GM12878 (cell line): ENCODE measurements at regions of chr11 and their contacts with region 1.

Region 1: GRCh38 chr11:62337303-62338181 is at the start of gene ASRGL1:
- DNase-seq: peak; percentile 21
- ATAC-seq: peak; percentile 97
- H3K4me3 ChIP-seq: peak within 1 kb of the TSS; percentile 67
- H3K27ac ChIP-seq: no peak within 1 kb of the TSS
- H3K4me1 ChIP-seq: peaks cover 4% of the 10 kb centered on the region
- H3K27me3 ChIP-seq: peaks cover 0 to 4% of the 10 kb centered on the region in 2 experiments; a peak in 2 of 4 replicates
- CTCF ChIP-seq: no peak
- EP300 ChIP-seq: no peak
- POLR2A ChIP-seq: peak; percentile 42; the same call in 1 of the 2 replicates
- RAD21 ChIP-seq: no peak
- polyA plus RNA-seq, gene ASRGL1: 0.97 to 1.9 TPM

Region 2: DNA sequence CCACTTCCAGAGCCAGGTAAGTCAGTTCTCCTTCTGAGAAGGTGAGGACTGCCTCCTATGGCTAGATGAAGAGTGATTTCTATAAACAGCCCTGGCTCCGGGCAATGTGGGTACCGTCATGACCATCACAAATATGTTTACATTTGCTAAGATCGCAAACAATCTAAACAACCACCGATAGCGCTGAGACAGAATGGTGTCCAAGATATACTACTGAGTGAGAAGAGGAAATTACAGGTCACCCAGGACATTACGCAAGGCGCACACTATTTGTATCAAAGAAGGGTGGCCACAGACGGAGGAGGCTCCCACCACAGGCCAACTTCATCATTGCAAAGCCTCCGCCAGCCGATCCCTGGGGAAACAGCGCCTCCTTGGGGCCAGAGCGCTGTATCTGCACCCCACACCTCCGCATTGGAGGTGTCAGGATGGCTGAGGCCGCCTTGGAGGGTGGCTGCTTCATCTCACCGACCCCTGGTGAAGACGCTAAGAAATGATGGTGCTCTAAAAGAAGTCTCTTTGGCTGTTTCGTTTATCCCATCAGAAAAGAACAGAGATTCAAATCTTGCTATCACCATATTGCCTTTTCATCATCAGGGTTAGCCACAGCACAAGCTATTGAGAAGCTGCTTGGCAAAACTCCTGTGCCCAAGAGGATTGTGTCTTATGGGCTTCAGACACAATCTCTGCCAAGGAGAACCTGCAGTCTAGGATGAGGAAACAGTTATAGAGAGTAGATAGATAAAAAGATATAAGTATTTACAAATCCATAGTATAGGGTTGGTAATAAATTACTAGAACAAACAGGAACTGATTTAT is 12.6 kb before region 1 on chr11:
- CTCF ChIA-PET with region 1: interaction called, 15 read pairs
- POLR2A ChIA-PET with region 1: no interaction called
- RAD21 ChIA-PET with region 1: no interaction called
- SMC1A ChIA-PET with region 1: interaction called, 4 read pairs
- in situ Hi-C with region 1: no loop called
- intact Hi-C with region 1: no loop called
- DNase-seq: no peak
- ATAC-seq: peak; percentile 94
- H3K4me3 ChIP-seq: no peak overlapping the region
- H3K27ac ChIP-seq: no peak overlapping the region
- H3K4me1 ChIP-seq: no peaks in the 10 kb centered on the region
- H3K27me3 ChIP-seq: no peaks in the 10 kb centered on the region; a peak in 2 of 4 replicates
- CTCF ChIP-seq: peak; percentile 69 to 75 (median 72)
- EP300 ChIP-seq: no peak
- POLR2A ChIP-seq: no peak
- RAD21 ChIP-seq: peak; percentile 57

Region 3: DNA sequence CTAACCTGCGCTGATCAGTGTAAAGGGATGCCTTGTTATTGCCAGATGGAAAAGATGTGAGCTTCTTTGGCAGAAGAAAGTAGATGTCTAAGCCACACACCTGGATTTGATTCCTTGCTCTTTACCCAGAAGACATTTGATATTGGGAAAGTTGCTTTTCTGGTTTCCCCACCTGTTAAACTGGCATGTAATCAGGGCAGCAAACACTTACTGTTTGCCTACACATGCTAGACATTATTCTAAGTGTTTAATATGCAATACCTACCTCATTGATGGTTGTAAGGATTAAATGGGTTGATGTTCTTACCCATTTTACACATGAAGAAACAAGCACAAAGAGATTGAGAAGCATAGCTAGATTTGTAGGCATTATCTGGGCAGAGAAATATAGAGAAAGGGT is 16.3 kb after region 1 on chr11:
- CTCF ChIA-PET with region 1: interaction called, 37 read pairs
- POLR2A ChIA-PET with region 1: no interaction called
- RAD21 ChIA-PET with region 1: no interaction called
- SMC1A ChIA-PET with region 1: interaction called, 6 read pairs
- in situ Hi-C with region 1: no loop called
- intact Hi-C with region 1: no loop called
- DNase-seq: no peak
- ATAC-seq: no peak
- H3K4me3 ChIP-seq: no peak overlapping the region
- H3K27ac ChIP-seq: no peak overlapping the region
- H3K4me1 ChIP-seq: peaks cover 8% of the 10 kb centered on the region
- H3K27me3 ChIP-seq: no peaks in the 10 kb centered on the region
- CTCF ChIP-seq: no peak
- EP300 ChIP-seq: no peak
- POLR2A ChIP-seq: no peak
- RAD21 ChIP-seq: no peak

Region 4: GRCh38 chr11:62360685-62361084 is 23.1 kb after region 1 on chr11:
- CTCF ChIA-PET with region 1: interaction called, 13 read pairs
- POLR2A ChIA-PET with region 1: no interaction called
- RAD21 ChIA-PET with region 1: no interaction called
- SMC1A ChIA-PET with region 1: interaction called, 4 read pairs
- in situ Hi-C with region 1: no loop called
- intact Hi-C with region 1: no loop called
- DNase-seq: no peak
- ATAC-seq: no peak
- H3K4me3 ChIP-seq: no peak overlapping the region
- H3K27ac ChIP-seq: no peak overlapping the region
- H3K4me1 ChIP-seq: no peaks in the 10 kb centered on the region
- H3K27me3 ChIP-seq: no peaks in the 10 kb centered on the region
- CTCF ChIP-seq: no peak
- EP300 ChIP-seq: no peak
- POLR2A ChIP-seq: no peak
- RAD21 ChIP-seq: no peak

Region 5: DNA sequence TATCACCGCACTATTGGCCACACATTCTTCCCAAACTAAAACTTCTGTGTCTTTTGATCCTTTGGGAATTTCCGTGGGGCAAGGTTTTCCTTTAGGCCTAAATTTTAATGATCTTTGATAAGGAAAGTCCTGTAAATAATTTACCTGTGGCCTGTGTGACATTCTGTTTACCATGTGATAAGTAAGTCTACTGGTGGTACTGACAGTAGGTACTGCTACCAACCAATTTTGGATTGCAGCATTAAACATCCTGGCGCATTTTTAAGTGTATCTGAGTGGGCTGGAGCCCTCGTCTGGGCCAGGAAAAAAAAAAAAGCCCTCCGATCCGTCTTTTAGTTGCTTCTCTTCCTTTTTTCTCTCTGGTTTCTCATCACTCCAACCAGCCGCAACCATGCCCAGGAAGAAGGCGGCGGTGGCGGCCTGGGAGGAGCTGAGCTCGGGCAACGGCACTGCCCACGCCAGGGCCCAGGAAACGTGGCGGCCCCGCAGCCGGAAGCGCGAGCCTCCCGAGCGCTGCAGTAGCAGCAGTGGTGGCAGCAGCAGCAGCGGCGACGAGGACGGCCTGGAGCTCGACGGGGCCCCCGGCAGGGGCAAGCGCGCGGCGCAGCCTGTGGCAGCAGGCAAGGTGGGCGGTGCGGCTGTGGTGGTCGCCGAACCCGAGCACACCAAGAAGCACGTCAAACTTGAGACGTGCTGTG is 33.4 kb after region 1 on chr11:
- CTCF ChIA-PET with region 1: interaction called, 98 read pairs
- POLR2A ChIA-PET with region 1: no interaction called
- RAD21 ChIA-PET with region 1: interaction called, 31 read pairs
- SMC1A ChIA-PET with region 1: interaction called, 70 read pairs
- in situ Hi-C with region 1: no loop called
- intact Hi-C with region 1: no loop called
- DNase-seq: no peak
- ATAC-seq: peak; percentile 82
- H3K4me3 ChIP-seq: no peak overlapping the region
- H3K27ac ChIP-seq: no peak overlapping the region
- H3K4me1 ChIP-seq: no peaks in the 10 kb centered on the region; the same call in 1 of the 2 replicates
- H3K27me3 ChIP-seq: no peaks in the 10 kb centered on the region
- CTCF ChIP-seq: no peak
- EP300 ChIP-seq: no peak
- POLR2A ChIP-seq: no peak
- RAD21 ChIP-seq: no peak

Region 6: GRCh38 chr11:62383822-62384221 is 46.3 kb after region 1 on chr11:
- CTCF ChIA-PET with region 1: interaction called, 17 read pairs
- POLR2A ChIA-PET with region 1: no interaction called
- RAD21 ChIA-PET with region 1: no interaction called
- SMC1A ChIA-PET with region 1: interaction called, 8 read pairs
- in situ Hi-C with region 1: no loop called
- intact Hi-C with region 1: no loop called
- DNase-seq: no peak
- ATAC-seq: no peak
- H3K4me3 ChIP-seq: no peak overlapping the region
- H3K27ac ChIP-seq: no peak overlapping the region
- H3K4me1 ChIP-seq: peaks cover 8% of the 10 kb centered on the region
- H3K27me3 ChIP-seq: no peaks in the 10 kb centered on the region
- CTCF ChIP-seq: no peak
- EP300 ChIP-seq: no peak
- POLR2A ChIP-seq: no peak
- RAD21 ChIP-seq: no peak

Region 7: DNA sequence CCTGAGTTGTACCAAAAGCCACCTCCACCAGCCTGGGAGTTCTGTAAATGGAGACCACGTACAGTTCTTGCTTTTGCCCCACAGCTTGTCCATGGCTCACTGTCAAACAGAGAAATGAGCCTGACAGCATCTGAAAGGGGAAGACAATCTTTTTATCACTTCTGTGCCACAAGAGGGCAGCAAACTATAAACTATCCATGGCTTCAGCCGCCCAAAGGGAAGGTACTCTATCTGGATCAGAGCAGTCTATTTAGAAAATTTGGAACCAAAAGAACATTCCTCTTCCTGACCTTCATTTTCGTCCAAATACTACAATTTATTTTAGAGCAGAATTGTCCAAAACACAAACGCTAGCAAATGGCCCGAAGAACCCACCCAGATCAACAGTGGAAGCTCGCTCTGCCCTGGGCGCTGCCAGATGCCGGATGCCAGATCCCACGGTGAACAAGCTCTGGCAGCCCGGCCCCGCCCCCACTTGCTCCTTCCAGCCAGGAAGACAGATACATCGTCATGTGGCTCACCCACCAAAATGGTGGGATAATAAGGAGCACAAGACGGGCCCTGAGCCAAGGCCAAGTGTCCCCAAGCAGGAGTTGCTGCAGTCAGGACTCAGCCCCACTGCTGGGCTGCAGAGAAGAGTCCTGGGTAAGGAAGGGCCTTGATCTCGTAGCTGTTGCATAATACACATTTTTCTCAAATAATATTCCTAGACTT is 57.4 kb after region 1 on chr11:
- CTCF ChIA-PET with region 1: interaction called, 33 read pairs
- POLR2A ChIA-PET with region 1: no interaction called
- RAD21 ChIA-PET with region 1: interaction called, 3 read pairs
- SMC1A ChIA-PET with region 1: interaction called, 6 read pairs
- in situ Hi-C with region 1: no loop called
- intact Hi-C with region 1: no loop called
- DNase-seq: peak; percentile 28
- ATAC-seq: peak; percentile 97
- H3K4me3 ChIP-seq: no peak overlapping the region
- H3K27ac ChIP-seq: no peak overlapping the region
- H3K4me1 ChIP-seq: no peaks in the 10 kb centered on the region
- H3K27me3 ChIP-seq: no peaks in the 10 kb centered on the region
- CTCF ChIP-seq: peak; percentile 51 to 82 (median 68); a peak in 5 of 6 replicates
- EP300 ChIP-seq: no peak
- POLR2A ChIP-seq: no peak
- RAD21 ChIP-seq: peak; percentile 86

Region 8: DNA sequence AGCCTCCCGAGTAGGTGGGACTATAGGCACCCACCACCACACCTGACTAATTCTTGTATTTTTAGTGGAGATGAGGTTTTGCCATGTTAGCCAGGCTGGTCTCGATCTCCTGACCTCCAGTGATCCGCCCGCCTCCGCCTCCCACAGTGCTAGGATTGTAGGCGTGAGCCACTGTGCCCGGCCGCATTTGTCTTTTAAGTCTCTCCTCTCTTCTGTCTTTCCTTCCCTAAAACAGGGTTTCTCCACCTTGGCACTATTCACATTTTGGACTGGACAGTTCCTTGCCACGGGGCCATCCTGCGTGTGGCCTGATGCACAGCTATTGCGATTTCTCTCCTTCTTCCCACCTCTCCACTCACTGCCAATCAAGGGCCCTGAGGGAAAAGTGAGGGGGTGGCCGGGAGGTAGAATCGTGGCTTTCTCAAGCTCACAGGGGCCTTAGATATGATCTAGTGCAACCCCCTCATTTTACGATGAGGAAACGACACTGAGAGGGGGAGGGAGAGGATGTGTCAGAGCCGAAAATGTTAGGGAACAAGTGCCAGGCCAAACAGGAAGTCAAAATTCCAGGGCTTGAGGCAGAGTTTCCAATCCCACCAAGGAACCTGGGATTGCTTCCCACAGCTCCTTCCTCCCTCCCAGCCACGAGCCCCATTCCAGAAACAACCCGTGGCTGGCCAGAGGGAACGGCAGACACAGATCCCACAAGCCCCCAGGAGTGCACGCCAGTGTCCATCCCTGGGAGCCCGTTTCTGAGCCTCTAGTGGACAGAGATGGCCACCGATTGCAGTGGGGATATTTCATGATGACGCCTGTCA is 102.5 kb after region 1 on chr11:
- CTCF ChIA-PET with region 1: no interaction called
- POLR2A ChIA-PET with region 1: no interaction called
- RAD21 ChIA-PET with region 1: no interaction called
- SMC1A ChIA-PET with region 1: no interaction called
- in situ Hi-C with region 1: no loop called
- intact Hi-C with region 1: no loop called
- DNase-seq: no peak
- ATAC-seq: no peak
- H3K4me3 ChIP-seq: no peak overlapping the region
- H3K27ac ChIP-seq: no peak overlapping the region
- H3K4me1 ChIP-seq: no peaks in the 10 kb centered on the region
- H3K27me3 ChIP-seq: no peaks in the 10 kb centered on the region
- CTCF ChIP-seq: no peak
- EP300 ChIP-seq: no peak
- POLR2A ChIP-seq: no peak
- RAD21 ChIP-seq: no peak